ENCODE measurements at regions of chr14 and their contacts with region 1.

Region 1: GRCh38 chr14:52117111-52117832 is 48.4 kb upstream of the NID2 start:
- DNase-seq: peak in 1 of 2 donors; percentile 49
- ATAC-seq: peak in 4 of 8 donors; percentile 29 to 79 (median 38)
- H3K4me3 ChIP-seq: no peak overlapping the region
- H3K27ac ChIP-seq: peak overlapping the region in 1 of 10 donors; percentile 2
- H3K4me1 ChIP-seq: no peaks in the 10 kb centered on the region
- H3K27me3 ChIP-seq: no peaks in the 10 kb centered on the region
- CTCF ChIP-seq: no peak

Region 2: DNA sequence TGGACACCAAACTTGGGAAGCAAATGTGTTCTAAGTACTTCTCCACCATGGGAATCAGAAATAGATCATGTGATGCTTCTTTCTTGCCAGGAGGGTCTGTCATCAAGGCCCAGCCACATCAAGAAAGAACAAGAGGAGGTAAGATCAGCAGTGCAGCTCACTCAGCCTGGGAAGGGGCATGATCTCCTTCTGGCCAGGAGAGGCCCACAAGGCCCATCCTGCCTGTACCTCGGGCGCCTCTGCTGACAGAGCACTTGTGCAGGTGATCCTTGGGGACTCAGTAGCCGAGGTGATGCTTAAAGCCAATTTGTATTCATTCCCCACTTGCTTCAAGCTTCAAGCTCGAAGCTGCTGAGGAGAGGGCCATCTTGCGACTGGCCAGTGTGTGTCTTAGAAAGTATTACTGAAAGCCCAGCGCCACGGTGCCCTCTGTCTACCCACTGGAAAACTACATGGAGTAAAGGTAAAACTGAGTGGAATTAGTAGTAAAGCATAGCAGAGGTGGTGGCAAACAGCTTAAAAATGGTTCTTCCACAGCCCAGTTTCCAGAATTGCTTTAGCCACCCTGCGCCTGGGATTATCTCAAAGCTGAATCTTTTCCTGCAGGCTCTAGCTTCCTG is 101.8 kb before region 1 on chr14:
- intact Hi-C with region 1: no loop called
- DNase-seq: peak in 1 of 2 donors; percentile 46
- ATAC-seq: peak in 7 of 8 donors; percentile 18 to 63 (median 51)
- H3K4me3 ChIP-seq: peak overlapping the region in 1 of 10 donors; percentile 12
- H3K27ac ChIP-seq: peak overlapping the region; percentile 65 to 85 (median 74)
- H3K4me1 ChIP-seq: peaks cover 13 to 100% (median 90%) of the 10 kb centered on the region in 9 donors
- H3K27me3 ChIP-seq: no peaks in the 10 kb centered on the region
- CTCF ChIP-seq: peak; percentile 17 to 70 (median 45)

Region 3: GRCh38 chr14:52076334-52076733 is 40.9 kb before region 1 on chr14:
- intact Hi-C with region 1: loop called in 1 of 10 experiments (anchors 5 kb)
- DNase-seq: peak in 1 of 2 donors; percentile 21
- ATAC-seq: peak in 6 of 8 donors; percentile 15 to 75 (median 38)
- H3K4me3 ChIP-seq: no peak overlapping the region
- H3K27ac ChIP-seq: no peak overlapping the region
- H3K4me1 ChIP-seq: peaks cover 0 to 71% (median 34%) of the 10 kb centered on the region in 9 donors
- H3K27me3 ChIP-seq: peaks cover 0 to 7% (median 0%) of the 10 kb centered on the region in 7 donors
- CTCF ChIP-seq: no peak